ENCODE measurements at regions of chr5 and their contacts with region 1.

Region 1: DNA sequence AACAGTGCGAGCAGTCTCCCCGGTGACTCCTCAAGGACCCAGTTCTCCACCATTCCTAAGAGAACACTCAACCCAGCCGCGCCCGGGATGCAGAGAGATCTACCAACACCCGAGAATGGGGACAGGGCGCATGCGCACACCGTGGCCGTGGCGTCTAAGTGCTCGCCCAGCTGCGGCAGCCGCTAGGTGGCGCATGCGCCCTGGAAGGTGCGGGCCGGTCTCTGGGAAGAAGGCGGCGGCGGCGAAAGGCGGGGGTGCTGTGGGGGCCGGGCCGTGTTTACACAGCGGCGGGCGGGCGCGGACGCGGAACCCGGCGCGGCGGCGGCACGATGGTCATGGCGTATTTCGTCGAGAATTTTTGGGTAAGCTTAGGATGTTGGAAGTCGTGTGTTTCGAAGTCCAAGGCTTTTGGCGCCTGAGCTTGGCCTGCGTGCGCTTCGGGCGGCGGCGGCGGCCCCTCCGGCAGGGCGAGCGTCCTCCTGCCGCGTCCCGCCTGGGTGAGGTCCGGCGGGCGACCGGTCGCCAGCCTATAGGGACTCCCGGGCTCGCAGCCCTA is at the start of gene FCHO2:
- DNase-seq: peak; percentile 90 to 99
- H3K4me3 ChIP-seq: peak within 1 kb of the TSS; percentile 83 to 95
- H3K27ac ChIP-seq: peak within 1 kb of the TSS; percentile 97 to 98
- H3K4me1 ChIP-seq: peaks cover 0 to 22% of the 10 kb centered on the region in 2 donors
- H3K27me3 ChIP-seq: no peaks in the 10 kb centered on the region
- CTCF ChIP-seq: peak; percentile 85 to 90 (median 86)
- total RNA-seq, gene FCHO2: 10.7 TPM

Region 2: GRCh38 chr5:72816311-72817145 is 139.3 kb before region 1 on chr5 and contains the start of gene TNPO1:
- intact Hi-C with region 1: loop called (anchors 2 kb)
- DNase-seq: peak; percentile 69 to 95
- H3K4me3 ChIP-seq: peak within 1 kb of the TSS; percentile 77 to 89
- H3K27ac ChIP-seq: peak within 1 kb of the TSS; percentile 98 to 99
- H3K4me1 ChIP-seq: peaks cover 0 to 14% of the 10 kb centered on the region in 2 donors
- H3K27me3 ChIP-seq: no peaks in the 10 kb centered on the region
- CTCF ChIP-seq: no peak
- total RNA-seq, gene TNPO1: 48.5 TPM

Region 3: GRCh38 chr5:72847989-72848473 is 107.8 kb before region 1 on chr5:
- intact Hi-C with region 1: loop called (anchors 5 kb)
- DNase-seq: peak; percentile 59 to 94
- H3K4me3 ChIP-seq: peak overlapping the region; percentile 89 to 97
- H3K27ac ChIP-seq: peak overlapping the region; percentile 90 to 94
- H3K4me1 ChIP-seq: peaks cover 8 to 41% of the 10 kb centered on the region in 2 donors
- H3K27me3 ChIP-seq: no peaks in the 10 kb centered on the region
- CTCF ChIP-seq: peak in 2 of 3 experiments; percentile 3 to 17

Region 4: GRCh38 chr5:73022471-73023169 is 66.8 kb after region 1 on chr5:
- intact Hi-C with region 1: loop called (anchors 5 kb)
- DNase-seq: no peak
- H3K4me3 ChIP-seq: no peak overlapping the region
- H3K27ac ChIP-seq: peak overlapping the region; percentile 56 to 60
- H3K4me1 ChIP-seq: peaks cover 0 to 13% of the 10 kb centered on the region in 2 donors
- H3K27me3 ChIP-seq: no peaks in the 10 kb centered on the region
- CTCF ChIP-seq: no peak

Region 5: DNA sequence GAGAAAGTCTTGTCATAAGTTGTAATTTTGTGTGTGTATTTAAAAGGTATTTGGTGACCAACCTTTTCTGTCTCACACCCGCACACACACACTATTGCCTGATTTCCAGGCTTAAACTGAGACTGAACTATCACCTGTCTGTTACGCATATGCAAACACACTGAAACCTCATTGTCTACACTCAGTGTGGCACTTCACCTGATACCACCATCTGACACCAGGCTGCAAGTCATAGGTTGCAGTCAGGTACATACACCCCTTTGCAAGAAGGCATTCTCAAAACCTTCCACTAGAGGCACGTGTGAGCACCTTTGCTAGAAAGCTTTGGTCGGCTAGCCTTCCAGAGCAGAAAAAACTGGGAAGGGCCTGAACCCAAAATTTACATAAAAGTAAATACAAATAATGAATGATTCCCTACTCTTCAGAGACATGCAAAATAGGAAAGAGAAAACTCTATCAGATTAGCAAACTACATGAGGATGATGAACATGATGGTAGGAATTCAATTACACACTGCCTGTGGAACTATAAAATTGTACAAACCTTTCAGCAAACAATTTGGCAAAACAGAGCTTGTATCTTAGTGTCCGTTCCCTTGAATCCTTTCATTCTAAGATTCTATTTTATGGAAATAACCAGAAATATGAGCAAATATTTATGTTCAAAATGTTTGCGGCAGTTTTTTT is 498.6 kb after region 1 on chr5:
- intact Hi-C with region 1: loop called (anchors 1 kb)
- DNase-seq: no peak
- H3K4me3 ChIP-seq: no peak overlapping the region
- H3K27ac ChIP-seq: no peak overlapping the region
- H3K4me1 ChIP-seq: peaks cover 0 to 7% of the 10 kb centered on the region in 2 donors
- H3K27me3 ChIP-seq: no peaks in the 10 kb centered on the region
- CTCF ChIP-seq: peak; percentile 39 to 74 (median 72)

Measured in ascending aorta (tissue), 2 donors.